Posterior cingulate gyrus (tissue), 11 donors: ENCODE measurements at regions of chr14 and their contacts with region 1.

Region 1: GRCh38 chr14:23006544-23007419 is 3.2 kb downstream of the C14orf93 start:
- DNase-seq: peak; percentile 95 to 100 (median 97)

Region 2: DNA sequence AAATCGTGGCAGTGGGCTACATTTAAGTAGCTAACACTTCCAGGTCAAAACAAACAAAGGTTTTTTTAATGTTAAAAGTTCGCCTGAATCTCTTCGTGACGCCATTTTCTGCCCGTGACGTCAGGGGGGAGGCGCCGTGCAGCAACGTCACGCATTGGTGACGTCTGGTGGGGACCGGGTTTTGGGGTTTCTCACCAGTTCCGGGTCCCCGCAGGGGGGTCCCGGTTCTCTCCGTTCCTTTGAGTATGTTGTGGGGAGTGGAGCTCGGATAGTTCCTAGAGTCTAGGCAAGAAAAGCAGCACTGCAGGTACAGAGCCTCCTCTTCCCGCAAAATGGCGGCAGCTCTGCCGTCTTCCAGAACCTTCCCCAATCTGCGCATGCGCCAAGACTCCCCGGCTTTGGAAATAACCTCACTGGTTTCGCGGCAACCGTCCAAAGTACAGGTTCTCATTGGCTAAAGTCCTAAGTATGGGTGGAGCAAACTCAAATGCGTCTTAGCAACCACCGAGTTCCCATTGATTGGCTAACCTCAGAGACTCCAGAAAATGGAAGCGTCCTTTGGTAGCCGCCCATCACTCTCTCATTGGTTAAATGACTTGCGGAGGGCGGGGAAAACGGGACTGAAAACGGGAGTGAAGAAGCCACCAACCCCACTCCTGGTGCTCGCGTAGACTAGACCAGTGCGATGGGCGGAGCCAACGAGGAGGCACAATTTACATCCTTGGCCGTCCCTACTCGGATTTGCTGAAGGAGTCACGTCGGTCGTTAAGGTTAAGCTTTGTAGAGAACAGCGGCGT is 87.8 kb before region 1 on chr14 and contains the start of gene RBM23:
- intact Hi-C with region 1: no loop called
- DNase-seq: peak; percentile 94 to 99 (median 98)

Region 3: GRCh38 chr14:23034483-23035302 is 27.9 kb after region 1 on chr14 and contains the start of gene PSMB5:
- intact Hi-C with region 1: loop called (anchors 2 kb)
- DNase-seq: peak; percentile 75 to 98 (median 85)